ENCODE measurements at regions of chr5 and their contacts with region 1.

Region 1: GRCh38 chr5:148443998-148444397 is 60.2 kb downstream of the FBXO38 start:
- DNase-seq: peak; percentile 30
- ATAC-seq: peak; percentile 81 to 90

Region 2: DNA sequence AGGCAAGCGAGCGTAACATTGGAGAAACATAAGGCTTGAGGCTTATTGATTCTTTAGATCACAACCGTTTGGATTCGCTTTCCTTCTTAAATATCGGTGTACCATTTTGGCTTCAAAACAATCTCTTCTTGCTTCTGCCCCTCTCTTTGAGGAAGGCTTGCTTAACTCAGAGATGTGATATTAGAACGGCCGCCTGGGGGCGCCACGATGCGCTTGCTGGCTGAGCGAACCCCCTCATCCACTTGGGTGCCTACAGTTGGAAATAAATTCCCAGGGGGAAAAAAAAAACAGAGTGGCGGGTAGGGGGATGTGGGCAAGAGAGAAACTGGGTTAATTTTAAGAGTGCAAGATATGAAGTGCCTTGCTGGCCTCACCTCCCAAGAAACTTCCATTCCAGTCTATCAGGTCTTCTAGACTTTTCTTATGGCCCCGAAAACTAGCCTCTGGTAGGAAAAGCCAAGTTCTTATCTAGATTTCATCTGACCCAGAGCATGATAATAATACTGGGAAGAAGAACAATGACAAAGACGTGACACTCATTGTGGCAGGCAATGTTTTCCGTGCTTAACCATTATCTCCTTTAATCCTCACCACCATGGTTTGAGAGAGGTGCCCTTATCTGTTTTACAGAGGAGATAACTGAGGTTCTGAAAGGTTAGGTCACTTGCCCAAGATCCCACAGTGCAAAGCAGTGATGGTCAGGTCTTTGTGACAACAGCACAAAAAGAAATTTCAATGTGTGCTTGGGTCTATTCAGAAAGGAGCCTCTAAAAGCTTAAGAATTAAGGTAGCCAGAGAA is 1049.9 kb before region 1 on chr5:
- intact Hi-C with region 1: no loop called
- DNase-seq: no peak
- ATAC-seq: no peak

Region 3: DNA sequence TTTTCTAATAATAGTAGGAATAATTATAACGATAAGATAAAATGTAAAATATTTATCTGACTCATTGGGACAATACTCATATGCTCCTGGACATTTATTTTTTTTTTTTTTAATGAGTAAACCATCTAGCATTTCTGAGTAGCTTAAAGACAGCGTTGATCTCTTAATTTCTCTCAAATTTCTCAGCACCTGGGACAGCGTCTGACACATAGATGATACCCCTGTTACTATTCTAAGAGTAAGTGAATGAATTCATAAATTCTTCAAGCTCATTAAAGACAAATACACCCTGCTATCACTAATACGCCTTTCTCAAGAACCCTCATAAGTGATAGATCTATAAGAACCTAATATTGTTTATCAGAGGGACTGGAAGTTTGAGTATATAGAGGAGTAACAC is 222.4 kb after region 1 on chr5:
- intact Hi-C with region 1: no loop called
- DNase-seq: no peak
- ATAC-seq: no peak

Region 4: DNA sequence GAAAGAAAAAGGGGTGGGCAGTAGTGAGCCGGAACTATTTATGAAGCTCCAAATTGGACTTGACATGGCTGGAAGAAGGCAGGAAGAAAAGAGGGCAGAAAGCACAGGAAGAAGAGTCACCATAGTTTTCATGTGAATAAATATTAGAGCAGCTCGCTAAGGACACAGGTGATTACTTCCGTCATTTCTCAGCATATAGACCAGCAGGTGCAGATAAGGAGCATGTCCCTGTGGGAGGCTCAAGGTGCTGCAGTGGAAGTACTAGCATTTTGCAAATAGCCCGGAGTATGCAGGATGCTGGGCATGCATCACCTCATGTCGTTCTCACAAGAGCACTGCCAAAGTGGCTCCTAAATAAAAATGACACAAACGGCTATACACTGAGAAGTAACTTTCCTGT is 281.7 kb after region 1 on chr5:
- intact Hi-C with region 1: loop called (anchors 1 to 5 kb)
- DNase-seq: no peak
- ATAC-seq: no peak

Measured in left cardiac atrium (tissue), 4 donors.